SK-N-SH (cell line): ENCODE measurements at regions of chr11 and their contacts with region 1.

Region 1: DNA sequence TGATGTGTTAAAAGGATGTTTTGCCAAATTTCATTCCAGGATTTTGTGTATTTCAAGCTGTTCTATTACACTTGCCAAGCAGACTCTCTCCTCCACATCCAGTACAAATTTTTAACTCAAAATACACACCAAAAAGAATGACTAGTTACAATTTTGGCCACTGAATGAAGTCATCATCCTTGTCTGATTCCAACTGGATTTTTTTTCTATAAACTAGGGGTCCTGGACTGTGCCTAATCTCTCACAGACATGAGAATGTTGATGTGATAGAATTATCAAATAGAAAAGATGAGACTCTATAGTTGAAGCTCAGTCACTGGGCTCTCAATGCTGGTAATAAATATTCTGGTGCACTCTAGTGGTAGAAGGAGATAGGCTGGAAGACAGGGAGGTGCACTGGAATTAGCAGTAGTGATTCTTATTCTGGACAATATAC is 85.8 kb downstream of the FANCF start:
- DNase-seq: peak; percentile 33
- H3K4me3 ChIP-seq: no peak overlapping the region; a peak in 1 of 4 replicates
- H3K27ac ChIP-seq: no peak overlapping the region
- H3K4me1 ChIP-seq: no peaks in the 10 kb centered on the region
- H3K27me3 ChIP-seq: no peaks in the 10 kb centered on the region
- CTCF ChIP-seq: peak; percentile 64
- EP300 ChIP-seq: no peak
- RAD21 ChIP-seq: peak; percentile 90

Region 2: GRCh38 chr11:22331771-22332170 is 208.1 kb before region 1 on chr11:
- CTCF ChIA-PET with region 1: interaction called, 42 read pairs
- POLR2A ChIA-PET with region 1: no interaction called
- DNase-seq: no peak
- H3K4me3 ChIP-seq: no peak overlapping the region
- H3K27ac ChIP-seq: no peak overlapping the region
- H3K4me1 ChIP-seq: no peaks in the 10 kb centered on the region
- H3K27me3 ChIP-seq: no peaks in the 10 kb centered on the region
- CTCF ChIP-seq: no peak
- EP300 ChIP-seq: no peak
- RAD21 ChIP-seq: no peak

Region 3: GRCh38 chr11:22337596-22338485 is 202.0 kb before region 1 on chr11 and contains the start of gene SLC17A6:
- CTCF ChIA-PET with region 1: interaction called, 42 read pairs
- POLR2A ChIA-PET with region 1: no interaction called
- DNase-seq: no peak
- H3K4me3 ChIP-seq: no peak within 1 kb of the TSS
- H3K27ac ChIP-seq: no peak within 1 kb of the TSS
- H3K4me1 ChIP-seq: no peaks in the 10 kb centered on the region
- H3K27me3 ChIP-seq: no peaks in the 10 kb centered on the region
- CTCF ChIP-seq: no peak
- EP300 ChIP-seq: no peak
- RAD21 ChIP-seq: no peak
- polyA plus RNA-seq, gene SLC17A6: not detected in 2 replicates

Region 4: GRCh38 chr11:22552885-22553284 is 13.0 kb after region 1 on chr11:
- CTCF ChIA-PET with region 1: interaction called, 40 read pairs
- POLR2A ChIA-PET with region 1: no interaction called
- DNase-seq: no peak
- H3K4me3 ChIP-seq: no peak overlapping the region
- H3K27ac ChIP-seq: no peak overlapping the region
- H3K4me1 ChIP-seq: peaks cover 0 to 4% of the 10 kb centered on the region in 2 experiments; a peak in 2 of 4 replicates
- H3K27me3 ChIP-seq: no peaks in the 10 kb centered on the region
- CTCF ChIP-seq: no peak
- EP300 ChIP-seq: no peak
- RAD21 ChIP-seq: no peak

Region 5: GRCh38 chr11:22558664-22559063 is 18.8 kb after region 1 on chr11:
- CTCF ChIA-PET with region 1: interaction called, 40 read pairs
- POLR2A ChIA-PET with region 1: no interaction called
- DNase-seq: peak; percentile 52
- H3K4me3 ChIP-seq: no peak overlapping the region
- H3K27ac ChIP-seq: peak overlapping the region in 1 of 2 experiments; percentile 97; a peak in 2 of 4 replicates
- H3K4me1 ChIP-seq: peaks cover 0 to 18% of the 10 kb centered on the region in 2 experiments; a peak in 2 of 4 replicates
- H3K27me3 ChIP-seq: no peaks in the 10 kb centered on the region
- CTCF ChIP-seq: no peak
- EP300 ChIP-seq: peak in 1 of 2 experiments; percentile 63; a peak in 2 of 4 replicates
- RAD21 ChIP-seq: 0 out of 2 replicates have a peak, but pooled peaks have one; percentile 22